CD8-positive, alpha-beta T cell (primary cell): ENCODE measurements at regions of chr18 and their contacts with region 1.

Region 1: DNA sequence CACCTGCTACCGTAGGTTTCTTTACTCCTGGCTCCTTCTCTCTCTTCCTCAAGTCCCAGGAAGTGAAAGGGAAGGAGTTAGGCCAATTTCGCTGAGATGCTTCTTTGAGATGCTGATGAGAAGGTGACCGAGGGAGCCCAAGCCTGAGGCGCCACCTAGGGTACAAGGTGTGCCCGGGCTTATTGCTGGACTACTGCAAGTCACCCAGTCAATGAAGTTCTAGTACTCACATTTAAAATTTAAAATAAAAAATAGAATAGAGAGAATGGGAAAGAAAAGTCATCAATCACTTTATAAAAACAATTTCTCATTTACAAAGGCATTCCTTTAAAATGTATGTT is 45.3 kb downstream of the ACAA2 start:
- DNase-seq: peak in 1 of 9 experiments; percentile 41
- ATAC-seq: no peak
- H3K4me3 ChIP-seq: no peak overlapping the region
- H3K4me3 Mint-ChIP-seq: no peak overlapping the region
- H3K27ac ChIP-seq: no peak overlapping the region
- H3K27ac Mint-ChIP-seq: no peak overlapping the region
- H3K4me1 ChIP-seq: no peaks in the 10 kb centered on the region
- H3K4me1 Mint-ChIP-seq: peaks cover 2% of the 10 kb centered on the region
- H3K27me3 ChIP-seq: no peaks in the 10 kb centered on the region
- H3K27me3 Mint-ChIP-seq: no peaks in the 10 kb centered on the region
- CTCF ChIP-seq: no peak

Region 2: DNA sequence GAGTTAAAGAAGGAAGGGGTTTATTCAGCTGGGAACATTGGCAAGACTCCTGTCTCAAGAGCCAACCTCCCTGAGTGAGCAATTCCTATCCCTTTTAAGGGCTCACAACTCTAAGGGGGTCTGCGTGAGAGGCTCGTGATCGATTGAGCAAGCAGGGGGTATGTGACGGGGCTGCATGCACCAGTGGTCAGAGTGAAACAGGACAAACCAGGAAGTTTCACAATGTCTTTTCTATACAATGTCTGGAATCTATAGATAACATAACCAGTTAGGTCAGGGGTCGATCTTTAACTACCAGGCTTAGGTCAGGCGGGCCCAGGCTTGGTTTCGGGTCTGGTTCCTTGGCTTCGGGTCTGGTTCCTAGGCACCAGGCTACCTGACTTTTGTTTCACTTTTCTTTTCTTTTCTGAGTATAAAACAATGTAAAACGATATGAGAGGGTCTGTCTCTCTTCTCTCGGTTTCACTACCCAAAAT is 236.3 kb before region 1 on chr18:
- CTCF ChIA-PET with region 1: no interaction called
- POLR2A ChIA-PET with region 1: no interaction called
- intact Hi-C with region 1: loop called in 1 of 2 experiments (anchors 10 kb)
- DNase-seq: no peak
- ATAC-seq: no peak
- H3K4me3 ChIP-seq: no peak overlapping the region
- H3K4me3 Mint-ChIP-seq: no peak overlapping the region
- H3K27ac ChIP-seq: no peak overlapping the region
- H3K27ac Mint-ChIP-seq: no peak overlapping the region
- H3K4me1 ChIP-seq: no peaks in the 10 kb centered on the region
- H3K4me1 Mint-ChIP-seq: no peaks in the 10 kb centered on the region
- H3K27me3 ChIP-seq: no peaks in the 10 kb centered on the region
- H3K27me3 Mint-ChIP-seq: peaks cover 17% of the 10 kb centered on the region
- CTCF ChIP-seq: no peak